Mammary epithelial cell (primary cell): ENCODE measurements at regions of chr19 and their contacts with region 1.

Region 1: GRCh38 chr19:47428177-47428894 is 9.0 kb upstream of the MEIS3 start:
- DNase-seq: peak; percentile 96
- H3K4me3 ChIP-seq: peak overlapping the region in 1 of 3 experiments; percentile 1
- H3K27ac ChIP-seq: no peak overlapping the region
- H3K4me1 ChIP-seq: peaks cover 20% of the 10 kb centered on the region
- H3K27me3 ChIP-seq: no peaks in the 10 kb centered on the region
- CTCF ChIP-seq: no peak

Region 2: GRCh38 chr19:47143322-47144073 is 284.8 kb before region 1 on chr19:
- CTCF ChIA-PET with region 1: no interaction called
- dilution Hi-C with region 1: no loop called
- in situ Hi-C with region 1: no loop called
- intact Hi-C with region 1: loop called (anchors 10 kb)
- DNase-seq: no peak
- H3K4me3 ChIP-seq: no peak overlapping the region
- H3K27ac ChIP-seq: no peak overlapping the region
- H3K4me1 ChIP-seq: no peaks in the 10 kb centered on the region
- H3K27me3 ChIP-seq: no peaks in the 10 kb centered on the region
- CTCF ChIP-seq: no peak

Region 3: DNA sequence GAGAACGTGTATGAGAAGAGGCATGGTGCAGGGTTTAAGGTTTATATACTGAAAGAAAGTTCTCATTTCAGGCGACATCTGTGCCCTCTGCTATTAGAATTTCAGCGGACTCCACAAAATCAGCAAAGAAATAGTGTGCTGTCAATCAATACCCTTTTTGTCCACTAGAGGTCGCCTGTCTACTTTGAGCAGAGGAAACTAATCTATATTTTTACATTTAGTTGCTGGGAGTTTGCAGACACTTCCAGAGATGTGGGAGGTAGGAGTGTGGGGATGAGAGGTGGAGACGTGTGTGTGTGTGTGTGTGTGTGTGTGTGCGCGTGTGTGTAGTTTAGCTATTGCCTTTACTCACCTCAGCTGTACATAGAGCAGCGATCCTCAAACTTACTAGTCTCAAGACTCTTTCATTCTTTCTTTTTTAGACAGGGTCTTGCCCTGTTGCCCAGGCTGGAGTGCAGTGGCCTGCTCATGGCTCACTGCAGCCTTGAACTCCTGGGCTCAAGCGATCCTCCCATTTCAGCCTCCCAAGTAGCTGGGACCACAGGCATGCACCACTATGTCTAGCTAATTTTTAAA is 143.9 kb before region 1 on chr19:
- CTCF ChIA-PET with region 1: no interaction called
- dilution Hi-C with region 1: no loop called
- in situ Hi-C with region 1: no loop called
- intact Hi-C with region 1: loop called (anchors 5 kb)
- DNase-seq: peak; percentile 37
- H3K4me3 ChIP-seq: no peak overlapping the region
- H3K27ac ChIP-seq: no peak overlapping the region
- H3K4me1 ChIP-seq: peaks cover 6% of the 10 kb centered on the region
- H3K27me3 ChIP-seq: no peaks in the 10 kb centered on the region
- CTCF ChIP-seq: peak; percentile 77 to 90

Region 4: GRCh38 chr19:47523473-47523872 is 95.1 kb after region 1 on chr19:
- CTCF ChIA-PET with region 1: no interaction called
- dilution Hi-C with region 1: no loop called
- in situ Hi-C with region 1: no loop called
- intact Hi-C with region 1: no loop called
- DNase-seq: no peak
- H3K4me3 ChIP-seq: no peak overlapping the region
- H3K27ac ChIP-seq: no peak overlapping the region
- H3K4me1 ChIP-seq: no peaks in the 10 kb centered on the region
- H3K27me3 ChIP-seq: peaks cover 6% of the 10 kb centered on the region
- CTCF ChIP-seq: no peak

Region 5: GRCh38 chr19:47600246-47601179 is 172.2 kb after region 1 on chr19:
- CTCF ChIA-PET with region 1: interaction called, 18 read pairs
- dilution Hi-C with region 1: no loop called
- in situ Hi-C with region 1: loop called in 1 of 2 experiments (anchors 10 kb)
- intact Hi-C with region 1: no loop called
- DNase-seq: peak; percentile 99
- H3K4me3 ChIP-seq: peak overlapping the region; percentile 57 to 90 (median 62)
- H3K27ac ChIP-seq: peak overlapping the region; percentile 70
- H3K4me1 ChIP-seq: peaks cover 17% of the 10 kb centered on the region
- H3K27me3 ChIP-seq: no peaks in the 10 kb centered on the region
- CTCF ChIP-seq: peak in 1 of 2 donors; percentile 2

Region 6: DNA sequence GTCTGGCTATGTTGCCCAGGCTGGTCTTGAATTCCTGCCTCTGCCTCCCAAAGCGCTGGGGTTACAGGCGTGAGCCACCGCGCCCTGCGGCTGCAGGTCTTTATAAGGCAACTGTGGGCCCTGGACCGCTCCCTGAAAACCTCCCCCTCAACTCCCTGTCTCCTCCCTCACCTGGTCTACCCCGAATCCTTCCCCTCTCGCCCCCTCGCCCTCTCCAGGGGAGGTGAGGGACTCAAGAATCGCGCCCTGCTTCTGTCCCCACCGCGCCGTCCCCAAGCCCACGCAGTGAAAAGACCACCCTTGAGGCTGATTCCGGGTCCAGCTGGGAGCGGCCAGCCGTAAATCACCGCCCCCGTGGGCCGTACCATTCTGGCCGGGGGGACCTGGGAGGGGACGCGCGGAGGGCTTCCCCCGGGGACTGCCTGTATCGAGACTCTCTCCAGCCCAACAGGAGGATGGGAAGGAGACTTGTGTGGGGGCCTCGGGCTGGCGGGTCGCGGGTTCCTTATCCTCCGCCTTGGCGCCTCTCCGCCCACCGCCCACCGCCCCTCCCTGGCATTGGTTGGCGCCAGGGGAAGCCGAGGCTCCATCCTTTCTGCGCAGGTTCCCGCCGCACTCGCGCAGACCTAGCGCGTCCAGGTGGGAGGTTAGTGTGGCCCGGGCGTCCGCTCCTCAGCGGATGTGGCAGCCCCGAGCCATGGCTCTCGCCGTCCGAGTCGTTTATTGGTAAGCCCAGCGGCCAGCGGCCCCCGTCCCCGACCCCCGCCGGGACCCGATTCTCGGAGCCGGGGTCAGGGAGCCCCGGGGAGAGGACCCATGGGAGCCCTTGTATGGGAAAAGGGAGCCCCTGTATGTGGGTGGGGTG is 350.0 kb after region 1 on chr19 and contains the start of gene SELENOW:
- CTCF ChIA-PET with region 1: no interaction called
- dilution Hi-C with region 1: no loop called
- in situ Hi-C with region 1: no loop called
- intact Hi-C with region 1: loop called (anchors 10 kb)
- DNase-seq: peak; percentile 81
- H3K4me3 ChIP-seq: peak within 1 kb of the TSS; percentile 84 to 94 (median 88)
- H3K27ac ChIP-seq: peak within 1 kb of the TSS; percentile 88
- H3K4me1 ChIP-seq: peaks cover 7% of the 10 kb centered on the region
- H3K27me3 ChIP-seq: no peaks in the 10 kb centered on the region
- CTCF ChIP-seq: no peak
- total RNA-seq, gene SELENOW: 262 to 392 TPM